Ascending aorta (tissue), 2 donors: ENCODE measurements at regions of chrX and their contacts with region 1.

Region 1: GRCh38 chrX:8737883-8738282 is 5.9 kb upstream of the ANOS1 start:
- DNase-seq: no peak
- H3K4me3 ChIP-seq: no peak overlapping the region
- H3K27ac ChIP-seq: no peak overlapping the region
- H3K4me1 ChIP-seq: no peaks in the 10 kb centered on the region
- H3K27me3 ChIP-seq: peaks cover 4% of the 10 kb centered on the region
- CTCF ChIP-seq: no peak

Region 2: GRCh38 chrX:7996851-7997250 is 741.0 kb before region 1 on chrX:
- intact Hi-C with region 1: loop called (anchors 1 kb)
- DNase-seq: no peak
- H3K4me3 ChIP-seq: no peak overlapping the region
- H3K27ac ChIP-seq: no peak overlapping the region
- H3K4me1 ChIP-seq: no peaks in the 10 kb centered on the region
- H3K27me3 ChIP-seq: no peaks in the 10 kb centered on the region
- CTCF ChIP-seq: no peak